ENCODE measurements at regions of chr11 and their contacts with region 1.

Region 1: GRCh38 chr11:12331239-12331874 is 46.0 kb upstream of the PARVA start:
- DNase-seq: peak; percentile 56 to 83 (median 66)
- ATAC-seq: peak; percentile 29
- H3K4me3 ChIP-seq: no peak overlapping the region
- H3K4me3 Mint-ChIP-seq: no peak overlapping the region
- H3K27ac ChIP-seq: no peak overlapping the region
- H3K27ac Mint-ChIP-seq: no peak overlapping the region
- H3K4me1 ChIP-seq: peaks cover 4% of the 10 kb centered on the region
- H3K4me1 Mint-ChIP-seq: peaks cover 11% of the 10 kb centered on the region
- H3K27me3 ChIP-seq: no peaks in the 10 kb centered on the region
- H3K27me3 Mint-ChIP-seq: no peaks in the 10 kb centered on the region
- CTCF ChIP-seq: peak; percentile 89

Region 2: GRCh38 chr11:12377824-12378593 is 46.7 kb after region 1 on chr11:
- CTCF ChIA-PET with region 1: no interaction called
- POLR2A ChIA-PET with region 1: interaction called, 5 read pairs
- intact Hi-C with region 1: loop called (anchors 2 to 5 kb)
- DNase-seq: peak in 3 of 14 experiments; percentile 19 to 51 (median 43)
- ATAC-seq: peak; percentile 46
- H3K4me3 ChIP-seq: peak overlapping the region; percentile 50
- H3K4me3 Mint-ChIP-seq: peak overlapping the region; percentile 80
- H3K27ac ChIP-seq: no peak overlapping the region
- H3K27ac Mint-ChIP-seq: no peak overlapping the region
- H3K4me1 ChIP-seq: peaks cover 12% of the 10 kb centered on the region
- H3K4me1 Mint-ChIP-seq: peaks cover 16% of the 10 kb centered on the region
- H3K27me3 ChIP-seq: peaks cover 0 to 3% of the 10 kb centered on the region in 2 experiments
- H3K27me3 Mint-ChIP-seq: peaks cover 44% of the 10 kb centered on the region
- CTCF ChIP-seq: no peak

Region 3: DNA sequence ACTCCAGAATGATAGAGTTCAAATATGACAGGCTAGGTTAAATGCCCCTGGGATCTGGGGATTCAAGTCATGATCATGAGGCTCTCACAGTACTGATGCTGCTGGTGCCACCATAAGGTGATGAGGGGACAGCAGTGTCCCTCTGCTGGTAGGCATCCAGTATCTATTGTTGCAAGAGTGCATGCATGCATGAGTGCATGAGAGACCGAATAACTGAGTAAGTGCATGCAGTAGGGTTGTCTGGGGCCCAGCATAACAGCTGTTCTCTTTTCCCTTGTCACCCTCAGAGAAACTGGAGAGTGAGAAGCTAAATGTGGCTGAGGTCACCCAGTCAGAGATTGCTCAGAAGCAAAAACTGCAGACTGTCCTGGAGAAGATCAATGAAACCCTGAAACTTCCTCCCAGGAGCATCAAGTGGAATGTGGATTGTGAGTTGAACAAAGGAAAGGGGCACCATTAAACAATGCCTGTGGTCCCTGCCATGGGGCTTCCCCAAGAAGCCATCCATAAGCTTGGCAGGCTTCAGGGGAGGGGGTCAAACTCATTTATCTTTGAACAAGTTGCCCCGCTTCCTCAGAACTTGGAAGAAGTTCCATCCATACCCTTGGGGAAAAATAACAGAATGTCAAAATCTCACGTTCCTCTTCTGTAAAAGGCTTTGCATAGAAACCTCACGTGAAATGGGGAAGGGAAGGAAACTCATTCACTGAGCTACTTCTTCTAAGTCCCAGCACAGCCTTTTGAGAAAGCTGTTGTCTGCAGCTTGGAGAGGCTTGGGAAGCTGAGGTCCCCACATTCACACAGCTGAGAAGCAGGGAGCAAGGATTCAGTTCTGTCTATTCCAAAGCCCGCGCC is 165.0 kb after region 1 on chr11:
- CTCF ChIA-PET with region 1: no interaction called
- POLR2A ChIA-PET with region 1: no interaction called
- intact Hi-C with region 1: loop called in 1 of 2 experiments (anchors 5 kb)
- DNase-seq: peak in 2 of 14 experiments; percentile 3 to 18
- ATAC-seq: no peak
- H3K4me3 ChIP-seq: no peak overlapping the region
- H3K4me3 Mint-ChIP-seq: no peak overlapping the region
- H3K27ac ChIP-seq: no peak overlapping the region
- H3K27ac Mint-ChIP-seq: no peak overlapping the region
- H3K4me1 ChIP-seq: no peaks in the 10 kb centered on the region
- H3K4me1 Mint-ChIP-seq: no peaks in the 10 kb centered on the region
- H3K27me3 ChIP-seq: no peaks in the 10 kb centered on the region
- H3K27me3 Mint-ChIP-seq: no peaks in the 10 kb centered on the region
- CTCF ChIP-seq: no peak

Region 4: GRCh38 chr11:12888525-12889158 is 557.3 kb after region 1 on chr11:
- CTCF ChIA-PET with region 1: interaction called, 31 read pairs
- POLR2A ChIA-PET with region 1: interaction called, 12 read pairs
- intact Hi-C with region 1: loop called (anchors 1 kb)
- DNase-seq: peak; percentile 40 to 78 (median 56)
- ATAC-seq: peak; percentile 43
- H3K4me3 ChIP-seq: no peak overlapping the region
- H3K4me3 Mint-ChIP-seq: no peak overlapping the region
- H3K27ac ChIP-seq: no peak overlapping the region
- H3K27ac Mint-ChIP-seq: no peak overlapping the region
- H3K4me1 ChIP-seq: no peaks in the 10 kb centered on the region
- H3K4me1 Mint-ChIP-seq: no peaks in the 10 kb centered on the region
- H3K27me3 ChIP-seq: peaks cover 6 to 8% of the 10 kb centered on the region in 2 experiments
- H3K27me3 Mint-ChIP-seq: peaks cover 5% of the 10 kb centered on the region
- CTCF ChIP-seq: peak; percentile 66

Region 5: DNA sequence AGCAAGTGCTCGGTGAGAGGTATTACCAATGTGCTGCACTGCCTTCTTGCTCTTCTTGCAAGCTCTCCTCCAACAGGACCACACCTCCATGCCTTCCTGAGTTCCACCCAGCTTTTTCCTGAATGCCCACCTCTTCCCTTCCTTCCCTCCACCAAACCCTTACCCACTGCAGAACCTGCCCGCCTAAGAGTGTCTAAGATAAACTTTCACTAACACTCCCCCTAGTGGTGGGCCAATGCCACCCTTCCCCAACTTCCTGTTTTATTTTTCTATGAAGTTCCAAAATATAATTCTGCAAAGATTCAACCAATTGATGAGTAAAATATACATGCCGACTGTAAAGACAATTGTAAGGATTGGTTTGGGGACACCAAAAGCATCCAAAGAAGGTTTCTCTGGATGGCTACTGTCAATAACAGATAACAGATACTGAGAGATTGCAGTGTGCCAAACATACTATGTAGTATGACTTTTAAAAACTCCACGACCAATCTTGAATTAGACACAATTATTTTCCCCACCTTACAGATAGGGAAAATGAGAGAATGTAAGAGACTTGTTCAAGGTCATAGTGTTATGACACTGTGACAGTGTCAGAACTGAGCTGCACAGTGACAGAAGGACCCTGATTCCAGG is 907.6 kb after region 1 on chr11:
- CTCF ChIA-PET with region 1: no interaction called
- POLR2A ChIA-PET with region 1: no interaction called
- intact Hi-C with region 1: loop called in 1 of 2 experiments (anchors 5 kb)
- DNase-seq: peak; percentile 21 to 76 (median 46)
- ATAC-seq: peak; percentile 73
- H3K4me3 ChIP-seq: no peak overlapping the region
- H3K4me3 Mint-ChIP-seq: no peak overlapping the region
- H3K27ac ChIP-seq: no peak overlapping the region
- H3K27ac Mint-ChIP-seq: no peak overlapping the region
- H3K4me1 ChIP-seq: no peaks in the 10 kb centered on the region
- H3K4me1 Mint-ChIP-seq: no peaks in the 10 kb centered on the region
- H3K27me3 ChIP-seq: peaks cover 0 to 4% of the 10 kb centered on the region in 2 experiments
- H3K27me3 Mint-ChIP-seq: peaks cover 23% of the 10 kb centered on the region
- CTCF ChIP-seq: peak; percentile 90

Measured in CD4-positive, alpha-beta T cell (primary cell).